SK-N-SH (cell line): ENCODE measurements at regions of chr1 and their contacts with region 1.

Region 1: GRCh38 chr1:184664042-184664655 is 90.5 kb downstream of the EDEM3 start:
- DNase-seq: peak; percentile 83
- H3K4me3 ChIP-seq: peak overlapping the region; percentile 40 to 55; a peak in 3 of 4 replicates
- H3K27ac ChIP-seq: no peak overlapping the region
- H3K4me1 ChIP-seq: peaks cover 0 to 3% of the 10 kb centered on the region in 2 experiments; a peak in 2 of 4 replicates
- H3K27me3 ChIP-seq: no peaks in the 10 kb centered on the region
- CTCF ChIP-seq: peak; percentile 70
- EP300 ChIP-seq: no peak
- RAD21 ChIP-seq: peak; percentile 81

Region 2: GRCh38 chr1:184056921-184057496 is 607.1 kb before region 1 on chr1:
- CTCF ChIA-PET with region 1: interaction called, 10 read pairs
- POLR2A ChIA-PET with region 1: no interaction called
- DNase-seq: no peak
- H3K4me3 ChIP-seq: peak overlapping the region; percentile 2 to 29; a peak in 1 of 4 replicates
- H3K27ac ChIP-seq: peak overlapping the region; percentile 81 to 87
- H3K4me1 ChIP-seq: peaks cover 17 to 29% of the 10 kb centered on the region in 2 experiments; a peak in 3 of 4 replicates
- H3K27me3 ChIP-seq: no peaks in the 10 kb centered on the region
- CTCF ChIP-seq: no peak
- EP300 ChIP-seq: peak in 1 of 2 experiments; percentile 60; a peak in 2 of 4 replicates
- RAD21 ChIP-seq: no peak

Region 3: GRCh38 chr1:184075055-184076029 is 588.8 kb before region 1 on chr1:
- CTCF ChIA-PET with region 1: interaction called, 27 read pairs
- POLR2A ChIA-PET with region 1: no interaction called
- DNase-seq: peak; percentile 37
- H3K4me3 ChIP-seq: no peak overlapping the region; a peak in 1 of 4 replicates
- H3K27ac ChIP-seq: peak overlapping the region in 1 of 2 experiments; percentile 39; a peak in 1 of 4 replicates
- H3K4me1 ChIP-seq: peaks cover 0 to 13% of the 10 kb centered on the region in 2 experiments; a peak in 2 of 4 replicates
- H3K27me3 ChIP-seq: no peaks in the 10 kb centered on the region
- CTCF ChIP-seq: peak; percentile 83
- EP300 ChIP-seq: no peak
- RAD21 ChIP-seq: peak; percentile 96

Region 4: GRCh38 chr1:184329962-184330868 is 333.9 kb before region 1 on chr1:
- CTCF ChIA-PET with region 1: interaction called, 10 read pairs
- POLR2A ChIA-PET with region 1: no interaction called
- DNase-seq: no peak
- H3K4me3 ChIP-seq: no peak overlapping the region
- H3K27ac ChIP-seq: no peak overlapping the region
- H3K4me1 ChIP-seq: no peaks in the 10 kb centered on the region
- H3K27me3 ChIP-seq: no peaks in the 10 kb centered on the region
- CTCF ChIP-seq: no peak
- EP300 ChIP-seq: no peak
- RAD21 ChIP-seq: no peak

Region 5: GRCh38 chr1:184387476-184388318 is 276.5 kb before region 1 on chr1:
- CTCF ChIA-PET with region 1: interaction called, 11 read pairs
- POLR2A ChIA-PET with region 1: interaction called, 3 read pairs
- DNase-seq: peak; percentile 79
- H3K4me3 ChIP-seq: peak overlapping the region; percentile 90 to 93
- H3K27ac ChIP-seq: peak overlapping the region; percentile 74 to 86
- H3K4me1 ChIP-seq: peaks cover 12 to 17% of the 10 kb centered on the region in 2 experiments; a peak in 3 of 4 replicates
- H3K27me3 ChIP-seq: no peaks in the 10 kb centered on the region
- CTCF ChIP-seq: no peak; the same call in 1 of the 2 replicates
- EP300 ChIP-seq: no peak
- RAD21 ChIP-seq: peak; percentile 40; the same call in 1 of the 2 replicates

Region 6: GRCh38 chr1:184649451-184649888 is 14.7 kb before region 1 on chr1:
- CTCF ChIA-PET with region 1: interaction called, 31 read pairs
- POLR2A ChIA-PET with region 1: no interaction called
- DNase-seq: no peak
- H3K4me3 ChIP-seq: 0 out of 4 replicates have a peak overlapping the region, but pooled peaks of 1 of the 2 experiments have one; percentile 13
- H3K27ac ChIP-seq: peak overlapping the region in 1 of 2 experiments; percentile 50; a peak in 3 of 4 replicates
- H3K4me1 ChIP-seq: peaks cover 0 to 8% of the 10 kb centered on the region in 2 experiments; a peak in 1 of 4 replicates
- H3K27me3 ChIP-seq: no peaks in the 10 kb centered on the region
- CTCF ChIP-seq: no peak
- EP300 ChIP-seq: no peak
- RAD21 ChIP-seq: no peak

Region 7: DNA sequence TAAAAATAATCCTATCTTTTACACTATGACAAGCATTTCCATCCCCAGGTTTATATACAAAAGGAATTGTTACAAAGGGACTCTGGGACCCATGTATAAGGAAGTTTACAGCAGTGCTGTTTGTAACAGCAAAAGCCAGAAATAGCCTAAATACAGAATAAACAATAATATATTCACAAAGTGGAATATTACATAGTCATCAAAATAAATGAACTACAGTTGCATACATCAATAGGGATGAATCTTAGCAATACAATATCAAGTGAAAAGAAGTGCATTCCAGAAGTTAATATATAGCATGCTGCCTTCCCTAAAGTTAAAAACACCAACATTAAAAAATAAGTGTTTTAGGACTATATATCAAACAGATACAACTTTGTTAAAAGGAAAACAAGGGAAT is 13.2 kb after region 1 on chr1:
- CTCF ChIA-PET with region 1: interaction called, 20 read pairs
- POLR2A ChIA-PET with region 1: no interaction called
- DNase-seq: no peak
- H3K4me3 ChIP-seq: no peak overlapping the region
- H3K27ac ChIP-seq: no peak overlapping the region
- H3K4me1 ChIP-seq: no peaks in the 10 kb centered on the region
- H3K27me3 ChIP-seq: no peaks in the 10 kb centered on the region
- CTCF ChIP-seq: no peak
- EP300 ChIP-seq: no peak
- RAD21 ChIP-seq: no peak

Region 8: GRCh38 chr1:184854496-184855140 is 190.5 kb after region 1 on chr1:
- CTCF ChIA-PET with region 1: no interaction called
- POLR2A ChIA-PET with region 1: no interaction called
- DNase-seq: no peak
- H3K4me3 ChIP-seq: no peak overlapping the region
- H3K27ac ChIP-seq: peak overlapping the region; percentile 56 to 80; a peak in 3 of 4 replicates
- H3K4me1 ChIP-seq: peaks cover 7 to 12% of the 10 kb centered on the region in 2 experiments; a peak in 1 of 4 replicates
- H3K27me3 ChIP-seq: no peaks in the 10 kb centered on the region
- CTCF ChIP-seq: no peak
- EP300 ChIP-seq: 0 out of 4 replicates have a peak, but pooled peaks of 1 of the 2 experiments have one; percentile 27
- RAD21 ChIP-seq: no peak